Esophagus muscularis mucosa (tissue), 4 donors: ENCODE measurements at regions of chr6 and their contacts with region 1.

Region 1: GRCh38 chr6:170295510-170296422 is 4.9 kb upstream of the DLL1 start:
- DNase-seq: no peak
- H3K4me3 ChIP-seq: peak overlapping the region; percentile 53 to 68 (median 54)
- H3K27ac ChIP-seq: no peak overlapping the region
- H3K4me1 ChIP-seq: peaks cover 44 to 67% (median 58%) of the 10 kb centered on the region in 4 donors
- H3K27me3 ChIP-seq: peaks cover 13 to 79% (median 53%) of the 10 kb centered on the region in 4 donors
- CTCF ChIP-seq: no peak
- EP300 ChIP-seq: no peak
- POLR2A ChIP-seq: no peak

Region 2: GRCh38 chr6:169709293-169709692 is 586.5 kb before region 1 on chr6:
- intact Hi-C with region 1: no loop called
- DNase-seq: no peak
- H3K4me3 ChIP-seq: no peak overlapping the region
- H3K27ac ChIP-seq: no peak overlapping the region
- H3K4me1 ChIP-seq: peaks cover 10 to 17% (median 14%) of the 10 kb centered on the region in 4 donors
- H3K27me3 ChIP-seq: no peaks in the 10 kb centered on the region
- CTCF ChIP-seq: no peak
- EP300 ChIP-seq: no peak
- POLR2A ChIP-seq: no peak

Region 3: GRCh38 chr6:169831450-169832246 is 464.1 kb before region 1 on chr6:
- intact Hi-C with region 1: loop called (anchors 10 kb)
- DNase-seq: peak; percentile 94
- H3K4me3 ChIP-seq: no peak overlapping the region
- H3K27ac ChIP-seq: no peak overlapping the region
- H3K4me1 ChIP-seq: peaks cover 0 to 7% (median 4%) of the 10 kb centered on the region in 4 donors
- H3K27me3 ChIP-seq: peaks cover 0 to 31% (median 0%) of the 10 kb centered on the region in 4 donors
- CTCF ChIP-seq: peak; percentile 74 to 89 (median 83)
- EP300 ChIP-seq: no peak
- POLR2A ChIP-seq: no peak

Region 4: DNA sequence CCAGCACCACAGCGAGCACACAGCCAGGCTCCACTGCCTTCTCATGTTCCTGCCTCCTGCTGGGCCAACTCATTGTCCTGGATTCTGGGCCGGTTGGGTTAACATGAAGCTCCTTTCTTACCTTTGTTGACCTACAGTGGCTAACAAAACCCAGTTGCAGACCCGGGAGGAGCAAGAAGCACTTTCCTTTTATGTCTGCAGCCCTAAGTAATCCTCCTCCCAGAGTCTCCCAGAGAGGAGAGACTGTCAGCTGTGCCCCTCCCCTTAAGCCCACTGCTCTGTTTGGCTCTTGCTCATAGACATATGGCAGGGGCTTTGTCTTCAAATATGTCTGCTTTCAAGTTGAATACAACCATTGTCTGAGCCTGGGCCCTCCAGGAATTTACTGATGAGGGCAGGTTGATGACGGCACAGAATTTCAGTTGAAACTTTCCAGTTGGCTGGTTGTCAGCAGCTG is 202.1 kb after region 1 on chr6:
- intact Hi-C with region 1: no loop called
- DNase-seq: no peak
- H3K4me3 ChIP-seq: no peak overlapping the region
- H3K27ac ChIP-seq: no peak overlapping the region
- H3K4me1 ChIP-seq: no peaks in the 10 kb centered on the region
- H3K27me3 ChIP-seq: peaks cover 0 to 33% (median 0%) of the 10 kb centered on the region in 4 donors
- CTCF ChIP-seq: no peak
- EP300 ChIP-seq: no peak
- POLR2A ChIP-seq: no peak